ENCODE measurements at regions of chr6 and their contacts with region 1.

Region 1: DNA sequence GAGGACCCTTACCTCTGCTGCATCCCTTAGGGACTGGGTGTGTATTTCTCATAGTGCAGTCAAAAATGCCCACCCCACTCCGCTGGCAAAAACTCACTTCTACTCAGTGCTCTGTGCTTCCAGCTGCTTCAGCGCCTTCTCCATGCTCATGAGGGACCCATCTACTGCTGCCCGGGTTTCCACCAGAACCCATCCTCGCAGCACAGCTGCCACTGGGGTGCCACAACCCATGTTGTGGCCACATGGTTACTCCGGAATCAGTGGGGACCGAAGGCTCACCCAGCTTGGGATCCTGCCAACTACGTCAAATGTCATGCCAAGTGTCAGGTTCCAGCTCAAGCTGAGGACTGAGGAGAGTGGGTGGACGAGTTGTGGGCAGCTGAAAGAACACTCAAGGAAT is 774.2 kb upstream of the EYS start:
- DNase-seq: no peak
- H3K4me3 ChIP-seq: no peak overlapping the region
- H3K27ac ChIP-seq: no peak overlapping the region
- H3K4me1 ChIP-seq: no peaks in the 10 kb centered on the region
- H3K27me3 ChIP-seq: no peaks in the 10 kb centered on the region
- CTCF ChIP-seq: no peak
- EP300 ChIP-seq: no peak
- POLR2A ChIP-seq: no peak

Region 2: GRCh38 chr6:65989676-65990075 is 491.5 kb before region 1 on chr6:
- in situ Hi-C with region 1: no loop called
- intact Hi-C with region 1: no loop called
- DNase-seq: no peak
- H3K4me3 ChIP-seq: no peak overlapping the region
- H3K27ac ChIP-seq: no peak overlapping the region
- H3K4me1 ChIP-seq: no peaks in the 10 kb centered on the region
- H3K27me3 ChIP-seq: no peaks in the 10 kb centered on the region
- CTCF ChIP-seq: no peak
- EP300 ChIP-seq: no peak
- POLR2A ChIP-seq: no peak

Region 3: DNA sequence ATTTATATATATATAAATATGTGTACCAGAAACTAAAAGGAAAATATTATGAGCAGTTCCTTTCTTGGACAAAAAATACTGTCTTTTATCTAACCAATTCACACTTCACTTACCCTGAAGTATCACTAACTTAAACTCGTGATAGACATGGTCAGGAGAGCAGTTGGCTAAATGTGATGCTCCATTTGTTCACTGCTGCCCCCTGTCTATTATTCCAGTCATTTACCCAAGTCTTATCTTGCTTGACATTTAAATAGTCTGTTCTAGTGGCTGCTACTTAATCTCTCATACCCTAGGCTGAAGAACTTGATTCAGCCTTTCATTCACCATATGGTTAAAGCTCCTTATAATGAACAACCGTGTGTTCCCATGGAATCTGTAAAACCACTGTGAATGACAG is 15.4 kb after region 1 on chr6:
- in situ Hi-C with region 1: no loop called
- intact Hi-C with region 1: loop called (anchors 1 kb)
- DNase-seq: no peak
- H3K4me3 ChIP-seq: no peak overlapping the region
- H3K27ac ChIP-seq: no peak overlapping the region
- H3K4me1 ChIP-seq: no peaks in the 10 kb centered on the region
- H3K27me3 ChIP-seq: no peaks in the 10 kb centered on the region
- CTCF ChIP-seq: no peak
- EP300 ChIP-seq: no peak
- POLR2A ChIP-seq: no peak

Measured in transverse colon (tissue), 4 donors.